Posterior vena cava (tissue), 2 donors: ENCODE measurements at regions of chr17 and their contacts with region 1.

Region 1: DNA sequence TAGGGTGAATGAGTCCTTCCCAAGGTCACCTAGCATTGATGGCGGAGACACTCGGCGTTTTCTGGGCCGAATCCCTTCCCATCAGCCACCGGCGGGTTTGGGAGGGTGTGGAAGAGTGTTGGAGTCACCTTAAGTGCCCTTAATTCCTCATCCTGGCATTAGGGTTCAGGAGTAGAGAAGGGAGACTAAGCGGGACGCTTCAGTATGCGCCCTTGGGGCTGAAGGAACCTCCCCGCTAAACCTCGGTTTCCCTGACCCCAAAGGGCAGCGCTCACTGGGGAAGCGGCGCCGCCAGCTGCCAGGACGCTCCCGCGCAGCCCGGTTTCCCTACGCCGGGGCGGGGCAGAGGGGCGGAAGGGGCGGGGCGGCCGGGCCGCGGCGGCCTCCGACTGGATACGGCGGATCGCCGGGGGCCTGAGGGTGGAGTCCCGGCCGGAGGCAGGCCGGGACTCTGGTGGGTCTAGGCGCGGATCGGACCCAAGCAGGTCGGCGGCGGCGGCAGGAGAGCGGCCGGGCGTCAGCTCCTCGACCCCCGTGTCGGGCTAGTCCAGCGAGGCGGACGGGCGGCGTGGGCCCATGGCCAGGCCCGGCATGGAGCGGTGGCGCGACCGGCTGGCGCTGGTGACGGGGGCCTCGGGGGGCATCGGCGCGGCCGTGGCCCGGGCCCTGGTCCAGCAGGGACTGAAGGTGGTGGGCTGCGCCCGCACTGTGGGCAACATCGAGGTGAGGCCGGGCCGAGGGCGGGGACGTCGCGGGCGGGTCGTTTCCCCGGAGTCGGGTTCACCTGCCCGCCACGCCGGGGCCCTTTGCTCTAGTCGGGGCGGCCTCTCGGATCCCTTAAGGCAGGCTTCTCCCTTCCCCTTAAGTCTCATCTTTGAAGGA is at the start of gene DHRS11:
- DNase-seq: peak; percentile 94
- total RNA-seq, gene DHRS11: 3.5 to 5.4 TPM

Region 2: DNA sequence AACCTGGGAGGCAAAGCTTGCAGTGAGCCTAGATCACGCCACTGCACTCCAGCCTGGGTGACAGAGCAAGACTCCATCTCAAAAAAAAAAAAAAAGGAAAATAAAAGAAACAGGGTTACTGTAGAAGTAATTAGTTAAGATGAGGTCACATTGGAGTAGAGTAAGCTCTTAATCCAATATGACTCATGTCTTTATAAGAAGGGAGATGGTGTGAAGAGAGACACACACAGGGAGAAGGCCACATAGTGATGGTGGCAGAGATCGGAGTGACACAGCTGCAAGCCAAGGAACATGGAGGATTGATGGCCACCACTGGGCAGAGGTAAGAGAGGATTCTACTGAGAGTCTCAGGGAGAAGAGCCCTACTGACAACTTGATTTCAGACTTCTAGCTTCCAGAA is 1364.1 kb before region 1 on chr17:
- intact Hi-C with region 1: loop called in 1 of 2 experiments (anchors 10 kb)
- DNase-seq: no peak

Region 3: GRCh38 chr17:36463916-36464315 is 127.8 kb before region 1 on chr17:
- intact Hi-C with region 1: no loop called
- DNase-seq: peak; percentile 90

Region 4: GRCh38 chr17:36566081-36566480 is 25.6 kb before region 1 on chr17:
- intact Hi-C with region 1: no loop called
- DNase-seq: no peak

Region 5: DNA sequence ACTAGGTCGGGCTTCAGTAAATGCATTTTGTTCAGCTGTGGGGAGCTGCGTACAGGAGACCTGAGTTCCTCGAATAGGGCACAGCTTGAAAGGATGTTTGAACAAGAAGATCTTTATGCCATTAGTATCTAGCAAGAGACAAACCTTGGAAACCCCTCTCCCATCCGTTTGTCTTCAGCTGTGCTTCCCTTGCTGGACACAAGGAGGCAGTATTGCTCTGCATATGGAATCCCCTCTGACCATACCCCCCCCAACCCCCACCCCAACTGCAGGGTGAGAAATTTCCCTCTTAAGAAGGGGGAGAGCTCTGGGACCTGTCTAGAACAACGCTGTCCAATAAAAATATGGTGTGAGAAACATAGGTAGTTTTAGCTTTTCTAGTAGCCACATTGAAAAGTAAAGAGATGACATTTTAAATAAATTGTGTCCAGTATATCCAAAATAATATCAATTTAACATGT is 11.3 kb after region 1 on chr17:
- intact Hi-C with region 1: no loop called
- DNase-seq: peak; percentile 25